Left cardiac atrium (tissue), 4 donors: ENCODE measurements at regions of chr13 and their contacts with region 1.

Region 1: GRCh38 chr13:98890186-98890585 is 87.7 kb downstream of the DOCK9 start:
- DNase-seq: no peak
- ATAC-seq: peak; percentile 47 to 82

Region 2: GRCh38 chr13:98155475-98156109 is 734.6 kb before region 1 on chr13:
- intact Hi-C with region 1: no loop called
- DNase-seq: no peak
- ATAC-seq: peak; percentile 15 to 38

Region 3: GRCh38 chr13:99033814-99034213 is 143.6 kb after region 1 on chr13:
- intact Hi-C with region 1: loop called in 1 of 2 experiments (anchors 5 kb)
- DNase-seq: no peak
- ATAC-seq: peak; percentile 70 to 73

Region 4: GRCh38 chr13:99103536-99103935 is 213.3 kb after region 1 on chr13:
- intact Hi-C with region 1: no loop called
- DNase-seq: no peak
- ATAC-seq: no peak

Region 5: GRCh38 chr13:99339736-99340397 is 449.7 kb after region 1 on chr13:
- intact Hi-C with region 1: no loop called
- DNase-seq: no peak
- ATAC-seq: peak in 1 of 2 donors; percentile 53